Right ventricle myocardium inferior (tissue), 1 donor: ENCODE measurements at regions of chr16 and their contacts with region 1.

Region 1: DNA sequence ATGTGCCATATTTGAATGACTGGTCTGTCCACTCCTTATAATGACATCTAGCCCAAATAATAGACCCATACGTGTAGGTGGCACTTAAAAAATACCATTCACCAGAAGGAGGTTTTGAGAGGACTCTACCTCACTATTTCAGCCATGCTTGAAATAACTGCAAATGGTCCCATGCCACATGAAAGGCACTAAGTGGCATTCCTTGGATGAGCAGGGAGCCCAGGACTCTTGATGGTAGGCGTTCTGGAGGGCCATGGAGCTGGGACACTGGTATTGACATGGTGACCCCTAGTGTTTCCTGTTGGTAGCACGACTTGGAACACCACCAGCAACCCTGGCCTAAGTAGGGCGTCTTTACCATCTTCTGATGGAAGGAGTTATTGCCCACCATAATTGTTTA is 148.7 kb upstream of the ZFHX3 start:
- DNase-seq: no peak
- ATAC-seq: peak; percentile 90

Region 2: DNA sequence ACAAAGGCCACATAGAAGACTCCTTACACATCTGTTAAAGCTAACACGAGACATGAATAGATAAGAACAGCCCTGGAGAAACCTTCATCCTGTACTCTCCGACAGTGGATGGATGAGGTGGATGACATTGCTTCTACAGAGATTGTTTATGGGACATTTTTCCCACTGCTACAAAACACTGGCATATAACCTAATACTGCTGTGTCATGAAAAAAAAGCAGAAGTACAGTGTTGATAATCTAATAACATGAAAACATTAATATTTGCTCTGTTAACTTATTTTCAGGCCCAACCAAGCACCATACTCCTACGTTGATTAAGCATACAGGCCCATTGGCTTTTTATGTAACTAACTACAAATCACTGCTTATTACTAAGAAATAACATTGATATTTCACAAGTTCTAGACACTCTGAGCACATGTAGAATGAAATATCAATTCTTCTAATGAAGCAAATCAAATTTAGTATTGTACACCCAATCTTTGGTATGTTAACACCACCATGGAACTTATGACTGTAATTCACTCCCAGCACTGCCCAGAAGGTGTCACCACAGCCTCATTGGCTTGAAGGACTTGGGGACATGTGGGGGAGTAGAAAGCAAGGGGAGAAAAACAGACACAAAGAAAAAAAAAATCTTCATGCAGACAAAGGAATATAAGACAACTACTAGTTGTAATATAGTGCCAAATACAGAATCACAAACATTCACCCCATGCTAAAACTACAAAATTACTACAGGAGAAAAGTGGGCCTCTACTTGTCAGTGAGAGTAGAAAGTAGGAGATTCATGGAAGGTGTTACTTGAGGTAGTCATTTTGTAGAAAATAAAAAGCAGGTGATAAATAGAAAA is 694.7 kb before region 1 on chr16:
- intact Hi-C with region 1: loop called (anchors 5 kb)
- DNase-seq: no peak
- ATAC-seq: peak; percentile 50

Region 3: GRCh38 chr16:72832621-72833248 is 363.9 kb before region 1 on chr16:
- intact Hi-C with region 1: loop called (anchors 2 kb)
- DNase-seq: peak; percentile 91
- ATAC-seq: peak; percentile 93

Region 4: DNA sequence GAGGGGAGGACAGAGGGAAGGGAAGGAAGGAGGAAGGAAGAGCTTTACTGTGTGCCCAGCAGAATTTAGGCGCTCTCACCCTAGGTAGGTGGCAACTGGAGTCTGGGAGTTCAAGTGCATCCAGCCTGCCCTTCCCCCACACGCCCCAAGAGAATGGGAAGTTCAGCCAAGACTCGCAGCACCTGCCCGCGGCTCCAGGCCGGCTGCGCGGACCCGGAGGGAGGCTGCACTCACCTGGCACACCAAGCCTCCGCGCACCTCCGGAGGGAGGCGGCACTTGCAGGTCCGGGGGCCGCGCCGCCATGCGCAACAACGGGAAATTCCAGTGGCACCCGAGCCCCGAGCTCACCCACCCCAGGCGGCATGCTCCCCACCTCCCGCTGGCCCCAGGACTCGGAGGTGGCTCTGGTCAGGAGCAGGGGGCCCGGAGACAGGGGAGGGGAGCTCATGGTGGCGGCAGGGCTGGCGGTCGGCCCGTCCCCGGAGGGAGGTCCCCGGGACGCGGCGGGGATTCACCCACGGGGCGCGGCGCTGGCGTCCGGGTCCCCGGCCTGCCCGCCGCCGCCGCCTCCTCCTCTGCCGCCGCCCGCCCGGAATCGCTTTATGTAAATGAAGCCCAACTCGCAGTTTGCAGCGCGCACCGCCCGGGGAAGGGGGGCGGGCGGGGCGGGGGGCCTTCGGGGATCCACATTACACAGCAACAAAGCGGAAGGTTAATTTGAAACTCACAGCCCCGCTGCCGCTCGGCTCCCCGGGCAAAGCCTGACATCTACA is 149.0 kb before region 1 on chr16 and contains the start of gene ZFHX3:
- intact Hi-C with region 1: no loop called
- DNase-seq: no peak
- ATAC-seq: peak; percentile 67
- total RNA-seq, gene ZFHX3: 8.4 TPM